ENCODE measurements at regions of chr16 and their contacts with region 1.

Region 1: DNA sequence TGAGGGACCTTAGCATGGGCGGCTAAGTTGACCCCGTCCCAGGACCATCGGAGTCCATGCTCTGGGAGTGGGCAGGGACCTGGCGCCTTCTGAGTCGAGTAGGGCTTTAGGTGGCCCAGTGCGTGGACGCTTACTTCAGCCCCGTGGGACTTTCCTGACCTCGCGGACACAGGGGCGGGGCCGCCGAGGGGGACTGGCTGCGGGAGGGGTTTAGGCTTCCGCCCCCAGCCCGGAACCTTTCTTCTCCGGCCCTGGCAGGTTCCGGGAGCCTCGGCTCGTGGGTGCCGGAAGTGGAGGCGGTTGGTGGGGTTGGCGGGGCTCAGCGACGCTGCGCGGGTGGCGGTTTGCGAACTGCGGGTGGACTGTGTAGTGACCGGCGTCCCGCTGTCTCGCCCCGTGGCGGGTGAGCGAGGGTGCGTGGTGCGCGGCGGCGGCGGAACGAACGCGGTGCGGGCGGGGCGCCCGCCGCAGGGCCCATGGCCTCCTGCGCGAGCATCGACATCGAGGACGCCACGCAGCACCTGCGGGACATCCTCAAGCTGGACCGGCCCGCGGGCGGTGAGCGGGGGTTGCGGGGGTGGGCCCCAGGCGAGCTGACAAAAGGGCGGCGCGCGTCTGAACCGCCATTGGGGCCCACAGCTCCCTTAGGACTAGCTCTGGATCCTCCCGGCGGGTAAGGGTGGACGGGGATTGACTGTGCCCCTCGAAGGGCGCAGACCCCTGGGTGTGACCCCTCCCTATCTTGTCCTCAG is at the start of gene EDC4:
- DNase-seq: peak; percentile 89
- H3K4me3 Mint-ChIP-seq: peak within 1 kb of the TSS; percentile 88
- H3K27ac Mint-ChIP-seq: peak within 1 kb of the TSS; percentile 81
- H3K4me1 Mint-ChIP-seq: peaks cover 35% of the 10 kb centered on the region
- H3K27me3 Mint-ChIP-seq: no peaks in the 10 kb centered on the region
- total RNA-seq, gene EDC4: 115 and 128 TPM in 2 replicates

Region 2: DNA sequence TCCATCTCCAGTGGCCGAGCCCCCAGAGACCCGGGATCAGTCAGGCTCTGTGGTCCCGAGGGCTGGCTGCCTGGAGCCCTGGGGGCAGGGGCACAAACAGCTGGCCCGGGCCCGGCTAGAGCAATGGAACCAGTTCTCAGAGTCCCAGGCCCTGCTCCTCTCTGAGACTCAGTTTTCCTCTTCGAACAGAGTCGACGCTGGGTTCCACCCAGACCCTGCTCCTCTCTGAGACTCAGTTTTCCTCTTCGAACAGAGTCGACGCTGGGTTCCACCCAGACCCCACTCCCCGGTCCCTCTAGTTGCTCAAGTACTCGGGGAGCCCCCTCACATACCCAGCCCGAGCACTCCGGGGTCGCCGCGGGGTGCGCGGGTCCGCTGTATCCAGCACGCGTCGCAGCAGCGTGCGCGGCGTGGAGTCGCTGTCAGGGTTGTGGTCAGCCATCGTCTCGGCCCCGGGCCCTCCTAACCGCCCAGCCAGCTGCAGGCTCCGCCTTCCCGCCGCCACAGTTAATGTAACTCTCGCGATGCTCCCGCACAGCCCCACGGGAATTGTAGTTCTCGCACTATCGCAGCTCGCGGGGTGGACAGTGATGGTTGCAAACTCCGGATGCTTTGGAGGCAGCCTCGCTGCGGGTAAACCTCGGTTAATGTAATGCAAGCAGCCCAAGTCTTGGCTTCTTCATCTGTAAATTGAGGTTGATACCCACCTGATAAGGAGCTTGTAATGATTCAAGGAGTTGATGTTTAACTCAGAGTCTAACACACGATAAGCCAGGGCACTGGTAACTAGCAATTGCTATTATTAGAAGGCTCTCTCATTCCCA is 39.3 kb before region 1 on chr16:
- intact Hi-C with region 1: loop called (anchors 5 kb)
- DNase-seq: peak; percentile 94
- H3K4me3 Mint-ChIP-seq: peak overlapping the region; percentile 94
- H3K27ac Mint-ChIP-seq: peak overlapping the region; percentile 89
- H3K4me1 Mint-ChIP-seq: peaks cover 18% of the 10 kb centered on the region
- H3K27me3 Mint-ChIP-seq: peaks cover 5% of the 10 kb centered on the region

Measured in activated T-helper 1 cell treated with anti-CD3 and anti-CD28 coated beads, Interleukin-12 subunit alpha, Interleukin-12 subunit beta, Interleukin-2, Interleukin-4 antibody, amounts not matched to agents 30 ng/mL and 10 ng/mL and 1 ng/mL, durations not matched to agents 14 hours and 24 hours and 36 hours (primary cell).